ENCODE measurements at regions of chr10 and their contacts with region 1.

Region 1: DNA sequence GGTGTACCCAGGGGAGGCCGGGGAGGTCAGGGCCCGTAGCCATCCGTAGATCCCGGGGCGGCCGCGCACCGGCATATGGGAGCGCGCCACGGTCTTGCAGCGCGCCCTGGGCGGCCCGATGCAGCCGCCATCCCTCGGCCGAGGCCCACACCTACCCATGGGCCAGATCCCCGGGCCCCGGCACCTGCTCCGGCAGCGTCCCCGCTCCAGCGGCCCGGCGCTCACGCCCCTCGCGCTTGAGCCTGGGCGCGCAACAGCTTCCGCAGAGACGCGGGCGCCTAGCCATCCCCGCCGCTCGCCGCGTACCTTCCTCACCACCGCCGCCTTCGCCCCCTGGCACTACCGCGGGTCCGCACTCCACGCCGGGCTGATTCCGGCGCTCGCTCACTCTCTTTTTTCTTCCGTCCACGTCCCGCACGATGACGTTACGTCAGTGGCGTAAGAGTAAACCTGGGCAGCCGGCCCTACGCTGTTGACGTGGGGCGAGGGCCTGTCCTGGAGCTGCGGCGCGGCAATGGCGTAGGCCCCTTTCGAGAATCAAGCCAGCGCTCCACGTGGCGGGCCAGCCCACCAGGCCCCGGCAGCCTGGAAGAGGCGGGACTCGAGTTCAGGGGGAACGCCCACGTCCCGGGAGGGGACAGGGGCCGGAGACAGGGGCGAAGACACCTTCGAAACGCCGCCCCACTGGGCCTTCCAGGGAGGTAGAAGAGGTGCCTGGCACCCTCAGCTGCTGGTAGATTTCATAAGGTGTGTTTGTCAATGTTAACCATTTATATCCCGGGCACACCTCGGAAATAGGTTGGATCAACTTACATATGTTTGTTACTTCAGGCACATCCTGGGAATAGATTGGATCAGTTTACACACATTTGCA is at the start of gene ALDH18A1:
- DNase-seq: peak; percentile 93
- H3K4me3 Mint-ChIP-seq: peak within 1 kb of the TSS; percentile 91
- H3K27ac Mint-ChIP-seq: peak within 1 kb of the TSS; percentile 80
- H3K4me1 Mint-ChIP-seq: peaks cover 25% of the 10 kb centered on the region
- H3K27me3 Mint-ChIP-seq: no peaks in the 10 kb centered on the region
- total RNA-seq, gene ALDH18A1: 68.6 to 69.5 TPM

Region 2: DNA sequence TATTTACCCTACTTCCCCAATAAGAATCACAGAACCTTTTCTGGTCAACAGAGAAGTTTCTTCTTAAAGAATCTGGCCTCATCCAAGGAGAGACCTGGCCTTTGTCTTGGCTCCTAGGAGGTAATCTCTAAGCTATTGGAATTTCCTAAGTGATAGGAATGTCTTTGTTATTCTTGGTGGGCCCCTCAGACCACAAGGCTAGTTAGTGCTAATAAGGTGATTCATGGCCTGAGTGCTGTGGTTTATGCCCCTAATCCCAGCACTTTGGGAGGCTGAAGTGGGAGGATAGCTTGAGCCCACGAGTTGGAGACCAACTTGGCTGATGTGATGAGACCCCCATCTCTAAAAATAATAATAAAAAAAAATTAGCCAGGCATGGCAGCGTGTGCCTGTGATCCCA is 1033.0 kb before region 1 on chr10:
- CTCF ChIA-PET with region 1: no interaction called
- POLR2A ChIA-PET with region 1: no interaction called
- intact Hi-C with region 1: no loop called
- DNase-seq: no peak
- H3K4me3 Mint-ChIP-seq: no peak overlapping the region
- H3K27ac Mint-ChIP-seq: no peak overlapping the region
- H3K4me1 Mint-ChIP-seq: no peaks in the 10 kb centered on the region
- H3K27me3 Mint-ChIP-seq: peaks cover 2% of the 10 kb centered on the region

Region 3: GRCh38 chr10:95561182-95562075 is 95.1 kb before region 1 on chr10 and contains the start of gene SORBS1:
- CTCF ChIA-PET with region 1: no interaction called
- POLR2A ChIA-PET with region 1: no interaction called
- intact Hi-C with region 1: loop called (anchors 1 kb)
- DNase-seq: peak; percentile 93
- H3K4me3 Mint-ChIP-seq: peak within 1 kb of the TSS; percentile 86
- H3K27ac Mint-ChIP-seq: peak within 1 kb of the TSS; percentile 9
- H3K4me1 Mint-ChIP-seq: peaks cover 4% of the 10 kb centered on the region
- H3K27me3 Mint-ChIP-seq: peaks cover 5% of the 10 kb centered on the region
- total RNA-seq, gene SORBS1: 1.5 to 1.8 TPM

Measured in activated CD4-positive, alpha-beta memory T cell treated with anti-CD3 and anti-CD28 coated beads for 36 hours (primary cell).